ENCODE measurements at regions of chr11 and their contacts with region 1.

Region 1: DNA sequence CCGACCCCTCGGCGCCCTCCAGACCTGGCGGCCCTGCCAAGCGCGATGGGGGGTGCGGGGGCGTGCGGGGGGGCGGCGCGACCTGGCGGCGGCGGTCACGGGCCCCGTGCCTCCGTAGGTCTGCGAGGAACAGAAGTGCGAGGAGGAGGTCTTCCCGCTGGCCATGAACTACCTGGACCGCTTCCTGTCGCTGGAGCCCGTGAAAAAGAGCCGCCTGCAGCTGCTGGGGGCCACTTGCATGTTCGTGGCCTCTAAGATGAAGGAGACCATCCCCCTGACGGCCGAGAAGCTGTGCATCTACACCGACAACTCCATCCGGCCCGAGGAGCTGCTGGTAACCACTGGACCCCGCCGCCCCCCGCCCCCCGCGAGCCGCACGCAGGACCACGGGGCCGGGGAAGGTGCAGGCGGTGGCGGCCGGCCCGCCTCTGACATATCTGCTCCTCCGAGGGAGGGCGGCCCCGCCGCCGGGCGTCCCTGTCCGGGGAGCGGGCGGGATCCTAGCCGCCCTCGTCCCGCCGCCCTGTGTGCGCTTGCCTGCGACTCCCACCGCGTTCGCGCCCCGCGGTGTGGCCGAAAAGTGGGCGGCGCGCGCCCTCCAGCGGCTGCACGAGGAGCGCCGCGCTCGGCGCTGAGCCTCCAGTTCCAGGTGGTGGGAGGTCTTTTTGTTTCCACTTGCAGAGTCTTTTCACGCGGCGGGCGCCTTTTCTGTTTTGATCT is 2.1 kb downstream of the CCND1 start:
- DNase-seq: peak; percentile 71 to 76
- H3K4me3 ChIP-seq: peak overlapping the region; percentile 79 to 89 (median 84)
- H3K27ac ChIP-seq: peak overlapping the region; percentile 86 to 88
- H3K4me1 ChIP-seq: peaks cover 16 to 30% of the 10 kb centered on the region in 2 donors
- H3K27me3 ChIP-seq: peaks cover 0 to 3% of the 10 kb centered on the region in 2 donors
- CTCF ChIP-seq: peak; percentile 77 to 88 (median 80)
- POLR2A ChIP-seq: no peak

Region 2: DNA sequence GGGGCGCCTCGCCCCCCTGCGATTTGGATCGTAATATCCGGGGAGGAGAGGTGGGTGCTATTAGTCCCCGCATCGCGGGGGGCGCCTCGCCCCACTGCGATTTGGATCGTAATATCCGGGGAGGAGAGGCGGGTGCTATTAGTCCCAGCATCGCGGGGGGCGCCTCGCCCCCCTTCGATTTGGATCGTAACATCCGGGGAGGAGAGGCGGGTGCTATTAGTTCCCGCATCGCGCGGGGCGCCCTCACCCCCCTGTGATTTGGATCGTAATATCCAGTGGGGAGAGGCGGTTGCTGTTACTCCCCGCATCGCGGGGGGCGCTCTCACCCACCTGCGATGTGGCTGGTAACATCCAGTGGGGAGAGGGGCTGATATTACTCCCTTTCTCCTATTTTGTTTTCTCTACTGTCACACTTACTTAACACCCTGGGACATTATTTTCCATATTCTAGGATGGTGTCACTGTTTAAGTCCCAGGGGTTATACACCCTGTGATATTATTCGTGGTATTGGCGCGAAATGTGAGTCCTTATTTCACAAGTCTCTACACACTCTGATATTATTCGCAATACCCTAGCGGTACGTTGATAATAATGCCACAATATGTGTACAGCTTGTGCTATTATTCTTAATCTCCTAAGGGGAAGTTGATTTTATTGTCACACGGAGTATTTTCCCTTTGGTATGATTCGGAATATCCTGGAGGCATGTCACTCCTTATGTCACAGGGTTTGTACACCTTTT is 1910.9 kb before region 1 on chr11:
- intact Hi-C with region 1: loop called (anchors 10 kb)
- DNase-seq: peak in 1 of 2 donors; percentile 37
- H3K4me3 ChIP-seq: peak overlapping the region in 2 of 3 donors; percentile 38 to 43
- H3K27ac ChIP-seq: no peak overlapping the region
- H3K4me1 ChIP-seq: no peaks in the 10 kb centered on the region
- H3K27me3 ChIP-seq: peaks cover 0 to 4% of the 10 kb centered on the region in 2 donors
- CTCF ChIP-seq: no peak
- POLR2A ChIP-seq: no peak

Region 3: GRCh38 chr11:69099180-69099579 is 543.9 kb before region 1 on chr11:
- intact Hi-C with region 1: loop called (anchors 2 kb)
- DNase-seq: no peak
- H3K4me3 ChIP-seq: no peak overlapping the region
- H3K27ac ChIP-seq: no peak overlapping the region
- H3K4me1 ChIP-seq: peaks cover 0 to under 1% of the 10 kb centered on the region in 2 donors
- H3K27me3 ChIP-seq: no peaks in the 10 kb centered on the region
- CTCF ChIP-seq: no peak
- POLR2A ChIP-seq: no peak

Region 4: DNA sequence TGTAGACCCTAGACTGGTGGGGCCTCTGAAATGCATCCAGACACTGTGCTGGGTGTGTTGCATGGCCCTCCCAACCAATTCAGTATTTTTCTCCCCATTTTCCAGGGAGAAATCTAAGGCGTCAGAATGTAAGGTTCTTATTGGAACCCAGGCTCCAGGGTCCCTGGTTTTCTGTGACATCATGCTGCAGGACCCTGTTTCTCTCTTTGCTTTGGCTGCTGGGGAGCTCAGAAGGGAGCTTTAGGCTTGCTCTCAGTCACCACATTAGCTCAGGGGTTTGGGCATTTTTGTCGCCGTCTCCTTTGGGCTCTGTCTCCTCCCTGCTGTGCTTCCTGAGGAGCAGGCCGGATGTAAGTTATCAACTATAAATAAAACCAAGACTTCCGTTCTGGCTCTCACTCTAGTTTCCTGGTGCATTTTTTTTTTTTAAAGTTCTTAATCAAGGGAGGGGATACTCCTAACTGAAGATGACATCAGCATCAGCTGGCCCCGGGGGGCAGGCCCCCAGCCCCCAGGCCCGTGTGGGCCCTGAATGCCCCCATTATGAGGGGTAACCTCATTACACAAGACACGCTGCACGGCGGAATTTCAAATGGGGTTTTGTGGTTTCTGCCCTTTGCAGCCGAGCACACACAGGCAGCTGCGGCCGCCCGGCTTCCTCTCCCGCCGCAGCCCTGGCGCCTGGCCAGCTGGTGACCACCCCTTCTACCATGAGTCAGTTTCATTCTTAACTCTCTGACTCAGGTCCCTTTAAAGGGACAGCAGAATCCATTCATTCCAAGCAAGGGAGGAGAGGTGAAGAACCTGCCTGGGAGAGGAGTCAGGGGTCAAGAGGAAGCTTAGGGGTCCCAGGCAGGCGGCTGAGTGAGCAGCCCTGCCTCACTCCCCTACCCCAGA is 345.9 kb before region 1 on chr11:
- intact Hi-C with region 1: loop called (anchors 10 kb)
- DNase-seq: peak; percentile 87 to 91
- H3K4me3 ChIP-seq: peak overlapping the region; percentile 11 to 50 (median 29)
- H3K27ac ChIP-seq: peak overlapping the region; percentile 84 to 93
- H3K4me1 ChIP-seq: peaks cover 9 to 22% of the 10 kb centered on the region in 2 donors
- H3K27me3 ChIP-seq: no peaks in the 10 kb centered on the region
- CTCF ChIP-seq: no peak
- POLR2A ChIP-seq: no peak

Region 5: DNA sequence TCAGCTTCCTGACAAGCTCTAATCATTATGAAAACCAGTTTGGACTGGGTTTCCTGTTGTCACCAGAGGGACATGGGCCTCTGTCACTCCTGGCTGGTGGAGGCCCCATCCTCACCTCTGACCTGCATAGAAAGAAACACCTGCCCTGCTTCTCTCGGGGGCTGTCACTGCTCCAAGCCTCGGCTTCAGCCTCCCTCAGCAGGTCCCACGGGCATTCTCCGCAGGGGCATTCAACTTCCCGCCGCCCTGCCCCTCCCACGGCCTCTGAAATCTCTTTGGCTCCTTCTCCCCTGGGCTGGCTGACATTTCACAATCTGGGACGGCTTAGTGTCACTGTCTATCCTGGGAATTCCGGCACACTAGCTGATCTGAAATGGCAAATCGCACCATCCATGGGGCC is 1013.2 kb after region 1 on chr11:
- intact Hi-C with region 1: loop called (anchors 5 kb)
- DNase-seq: no peak
- H3K4me3 ChIP-seq: no peak overlapping the region
- H3K27ac ChIP-seq: no peak overlapping the region
- H3K4me1 ChIP-seq: no peaks in the 10 kb centered on the region
- H3K27me3 ChIP-seq: no peaks in the 10 kb centered on the region
- CTCF ChIP-seq: no peak
- POLR2A ChIP-seq: no peak

Measured in breast epithelium (tissue), 4 donors.